Cardiac septum (tissue), 1 donor: ENCODE measurements at regions of chr2 and their contacts with region 1.

Region 1: GRCh38 chr2:202033321-202034248 is at the start of gene FZD7:
- DNase-seq: peak; percentile 95
- total RNA-seq, gene FZD7: 34.7 TPM

Region 2: GRCh38 chr2:201780674-201781581 is 252.7 kb before region 1 on chr2 and contains the start of gene ALS2:
- intact Hi-C with region 1: loop called (anchors 5 kb)
- DNase-seq: peak; percentile 98
- total RNA-seq, gene ALS2: 36.5 TPM

Region 3: GRCh38 chr2:201882353-201883090 is 151.1 kb before region 1 on chr2:
- intact Hi-C with region 1: loop called (anchors 10 kb)
- DNase-seq: no peak

Region 4: GRCh38 chr2:201955702-201956141 is 77.9 kb before region 1 on chr2:
- intact Hi-C with region 1: no loop called
- DNase-seq: no peak

Region 5: DNA sequence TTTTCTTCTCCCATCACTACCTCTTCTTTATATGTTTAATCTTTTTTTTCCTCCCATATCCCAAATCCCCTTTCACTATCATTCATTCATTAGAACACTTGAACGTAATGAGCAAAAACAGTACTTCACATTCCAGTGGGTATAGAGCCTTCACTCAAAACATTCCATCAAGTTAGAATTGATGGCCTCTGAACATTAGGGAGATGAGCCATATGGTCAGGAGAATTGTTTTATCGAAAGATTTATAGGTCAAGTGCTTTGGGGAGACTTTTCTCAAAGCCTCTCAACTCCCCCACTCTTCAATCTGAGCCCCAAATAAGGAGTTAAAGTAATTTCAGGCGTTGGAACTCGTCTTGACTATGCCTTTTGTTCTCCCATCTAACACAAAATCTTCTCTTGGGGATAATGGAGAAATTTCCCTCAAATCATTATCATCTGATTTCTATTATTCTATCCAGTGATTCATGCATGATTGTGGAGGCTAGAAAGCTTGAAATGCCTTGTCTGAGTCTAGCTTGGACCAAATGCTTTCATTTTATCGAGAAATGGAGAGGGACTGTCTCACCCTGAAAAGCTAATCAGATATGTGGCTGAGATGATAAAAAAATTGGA is 118.6 kb after region 1 on chr2:
- intact Hi-C with region 1: loop called (anchors 5 kb)
- DNase-seq: no peak

Region 6: GRCh38 chr2:202178342-202178958 is 144.9 kb after region 1 on chr2:
- intact Hi-C with region 1: loop called (anchors 5 kb)
- DNase-seq: no peak